MCF 10A (cell line): ENCODE measurements at regions of chr11 and their contacts with region 1.

Region 1: DNA sequence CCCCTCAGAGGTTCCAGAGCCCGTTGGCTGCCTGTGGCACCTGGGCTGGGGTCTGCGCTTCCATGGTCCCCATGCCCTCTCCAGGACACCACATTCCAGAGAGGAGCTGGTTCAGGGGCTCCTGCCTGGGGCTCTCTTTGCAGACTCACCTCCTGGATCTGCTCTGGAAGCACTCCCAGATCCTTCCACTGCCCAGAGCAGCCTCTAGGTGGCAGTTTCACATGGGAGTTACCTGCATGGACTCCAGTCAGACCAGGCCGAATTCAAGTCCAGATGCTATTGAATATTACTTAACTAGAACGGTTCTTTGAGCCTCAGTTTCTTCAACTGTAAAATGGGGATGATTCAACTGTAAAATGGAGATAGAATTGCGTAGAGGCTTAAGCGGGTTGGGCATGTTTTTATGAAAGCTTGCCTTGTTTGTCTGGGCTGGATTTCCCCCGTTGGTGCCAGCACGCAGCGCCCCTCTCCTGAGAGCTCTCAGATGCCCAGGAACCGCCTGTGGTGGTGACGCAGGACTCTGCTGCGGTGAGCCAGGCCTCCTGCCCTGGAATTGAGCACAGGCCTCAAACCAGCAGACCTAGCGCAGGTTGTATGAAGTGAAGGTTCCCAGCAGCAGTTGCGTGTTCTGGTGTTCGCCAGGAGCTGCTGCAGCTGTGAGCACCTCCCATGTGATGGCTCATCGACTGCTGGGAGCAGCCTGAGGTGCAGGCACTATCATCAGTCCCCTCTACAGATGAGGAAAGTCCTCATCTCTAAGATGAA is 44.2 kb downstream of the LMO1 start:
- DNase-seq: peak; percentile 65
- H3K4me3 Mint-ChIP-seq: no peak overlapping the region
- H3K27ac Mint-ChIP-seq: no peak overlapping the region
- H3K4me1 Mint-ChIP-seq: no peaks in the 10 kb centered on the region
- H3K27me3 Mint-ChIP-seq: peaks cover 14% of the 10 kb centered on the region
- CTCF ChIP-seq: peak; percentile 72

Region 2: DNA sequence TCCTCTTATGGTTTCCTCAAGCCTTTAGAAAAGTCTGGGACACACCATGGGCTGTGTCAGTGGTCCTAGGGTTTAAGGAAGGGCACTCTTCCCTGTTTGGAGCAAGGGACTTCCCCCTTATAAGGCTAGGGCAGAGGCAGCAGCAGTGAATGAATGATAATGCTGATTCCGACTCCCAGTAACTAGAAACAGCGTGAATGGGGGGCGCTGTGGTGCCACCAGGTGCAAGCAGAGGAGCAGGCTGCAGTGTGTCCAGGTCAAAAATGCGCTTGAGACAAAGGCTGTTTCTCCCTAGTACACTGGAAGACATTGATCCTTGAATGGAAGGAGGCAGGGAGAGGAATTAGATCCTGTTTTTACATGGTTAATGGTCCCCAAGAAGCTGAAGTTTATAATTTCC is 39.0 kb before region 1 on chr11:
- CTCF ChIA-PET with region 1: no interaction called
- POLR2A ChIA-PET with region 1: no interaction called
- intact Hi-C with region 1: no loop called
- DNase-seq: no peak
- H3K4me3 Mint-ChIP-seq: no peak overlapping the region
- H3K27ac Mint-ChIP-seq: no peak overlapping the region
- H3K4me1 Mint-ChIP-seq: no peaks in the 10 kb centered on the region
- H3K27me3 Mint-ChIP-seq: peaks cover 48% of the 10 kb centered on the region
- CTCF ChIP-seq: no peak

Region 3: DNA sequence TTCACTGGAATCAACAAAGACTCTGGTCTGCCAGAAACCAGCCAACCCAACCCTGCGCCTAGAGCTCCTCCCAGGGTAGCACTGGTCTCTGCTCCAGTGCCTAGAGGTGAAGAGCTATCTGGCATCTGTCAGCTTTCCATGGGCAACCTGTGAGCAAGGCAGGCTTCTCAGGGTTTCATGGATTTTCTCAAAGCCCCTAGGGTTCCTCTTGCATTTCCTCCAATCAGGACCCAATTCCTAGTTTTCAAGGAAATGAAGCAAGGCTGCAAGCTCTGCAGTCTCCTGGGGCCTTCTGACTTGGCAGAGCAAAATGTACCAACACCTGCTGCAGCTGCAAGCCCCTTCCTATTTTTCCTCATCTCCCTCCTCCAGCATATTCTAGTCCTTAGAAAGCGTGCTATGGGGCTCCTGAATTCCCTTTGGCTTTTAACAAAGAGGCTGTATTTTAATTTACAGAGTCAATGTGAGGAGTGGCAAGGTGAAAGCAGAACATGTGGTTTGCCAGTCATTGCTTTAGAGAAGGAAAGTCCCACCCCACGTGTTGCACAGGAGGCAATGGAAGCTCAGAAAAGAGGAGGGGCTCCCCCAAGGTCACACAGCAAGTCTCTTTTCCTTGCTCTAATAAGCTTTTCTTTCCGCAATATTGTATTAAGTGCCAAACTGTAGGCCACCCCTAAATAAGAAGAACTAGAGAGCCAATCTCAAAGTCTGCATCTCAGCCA is 17.6 kb before region 1 on chr11:
- CTCF ChIA-PET with region 1: interaction called, 12 read pairs
- POLR2A ChIA-PET with region 1: no interaction called
- intact Hi-C with region 1: no loop called
- DNase-seq: no peak
- H3K4me3 Mint-ChIP-seq: no peak overlapping the region
- H3K27ac Mint-ChIP-seq: no peak overlapping the region
- H3K4me1 Mint-ChIP-seq: no peaks in the 10 kb centered on the region
- H3K27me3 Mint-ChIP-seq: peaks cover 39% of the 10 kb centered on the region
- CTCF ChIP-seq: no peak

Region 4: GRCh38 chr11:8209208-8209807 is 10.1 kb before region 1 on chr11:
- CTCF ChIA-PET with region 1: interaction called, 12 read pairs
- POLR2A ChIA-PET with region 1: no interaction called
- intact Hi-C with region 1: no loop called
- DNase-seq: no peak
- H3K4me3 Mint-ChIP-seq: no peak overlapping the region
- H3K27ac Mint-ChIP-seq: no peak overlapping the region
- H3K4me1 Mint-ChIP-seq: no peaks in the 10 kb centered on the region
- H3K27me3 Mint-ChIP-seq: peaks cover 18% of the 10 kb centered on the region
- CTCF ChIP-seq: peak; percentile 36

Region 5: GRCh38 chr11:8403310-8403709 is 183.9 kb after region 1 on chr11:
- CTCF ChIA-PET with region 1: no interaction called
- POLR2A ChIA-PET with region 1: no interaction called
- intact Hi-C with region 1: no loop called
- DNase-seq: peak; percentile 27
- H3K4me3 Mint-ChIP-seq: no peak overlapping the region
- H3K27ac Mint-ChIP-seq: no peak overlapping the region
- H3K4me1 Mint-ChIP-seq: no peaks in the 10 kb centered on the region
- H3K27me3 Mint-ChIP-seq: peaks cover 28% of the 10 kb centered on the region
- CTCF ChIP-seq: no peak

Region 6: GRCh38 chr11:8744423-8744822 is 525.0 kb after region 1 on chr11:
- CTCF ChIA-PET with region 1: no interaction called
- POLR2A ChIA-PET with region 1: no interaction called
- intact Hi-C with region 1: no loop called
- DNase-seq: peak; percentile 81
- H3K4me3 Mint-ChIP-seq: no peak overlapping the region
- H3K27ac Mint-ChIP-seq: no peak overlapping the region
- H3K4me1 Mint-ChIP-seq: peaks cover 9% of the 10 kb centered on the region
- H3K27me3 Mint-ChIP-seq: no peaks in the 10 kb centered on the region
- CTCF ChIP-seq: no peak